CD4-positive, alpha-beta memory T cell (primary cell): ENCODE measurements at regions of chr13 and their contacts with region 1.

Region 1: DNA sequence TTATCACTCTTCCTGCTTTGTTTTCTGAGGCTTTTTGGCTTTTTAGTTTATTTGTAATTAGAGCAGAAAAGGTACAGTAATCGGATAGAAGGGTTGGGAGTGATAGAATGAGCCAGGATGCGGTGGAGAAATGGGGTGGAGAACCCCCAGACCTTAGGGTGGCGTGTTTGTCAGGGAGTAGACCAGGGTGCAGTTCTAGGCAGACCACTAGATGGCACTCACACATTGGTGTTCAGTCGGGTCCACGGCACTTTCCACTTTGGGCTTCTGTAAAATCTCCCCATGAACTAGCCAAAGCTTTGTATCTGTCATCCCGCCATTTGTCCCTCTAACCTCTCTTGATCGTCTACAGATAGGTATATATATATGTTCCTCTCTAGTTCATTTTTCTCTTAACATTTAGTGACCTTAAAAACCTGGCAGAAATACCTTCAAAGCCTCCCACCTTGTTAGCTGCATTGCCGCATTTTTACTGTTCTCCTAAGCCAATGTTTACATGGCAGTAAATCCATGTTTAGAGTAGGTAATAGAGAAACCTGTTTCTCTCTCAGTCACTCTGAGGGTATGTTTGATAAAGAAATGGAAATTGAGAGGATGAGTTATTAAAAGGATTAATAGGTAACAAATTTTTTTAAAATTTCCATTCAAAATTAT is 154.9 kb downstream of the TM9SF2 start:
- DNase-seq: peak; percentile 79 to 85 (median 81)
- H3K4me3 ChIP-seq: peak overlapping the region in 1 of 2 donors; percentile 43
- H3K4me3 Mint-ChIP-seq: peak overlapping the region; percentile 74 to 88 (median 86)
- H3K27ac ChIP-seq: peak overlapping the region; percentile 76
- H3K27ac Mint-ChIP-seq: peak overlapping the region; percentile 88 to 96 (median 95)
- H3K4me1 ChIP-seq: peaks cover 56% of the 10 kb centered on the region
- H3K4me1 Mint-ChIP-seq: peaks cover 33 to 55% (median 42%) of the 10 kb centered on the region in 4 donors
- H3K27me3 ChIP-seq: no peaks in the 10 kb centered on the region
- H3K27me3 Mint-ChIP-seq: no peaks in the 10 kb centered on the region

Region 2: DNA sequence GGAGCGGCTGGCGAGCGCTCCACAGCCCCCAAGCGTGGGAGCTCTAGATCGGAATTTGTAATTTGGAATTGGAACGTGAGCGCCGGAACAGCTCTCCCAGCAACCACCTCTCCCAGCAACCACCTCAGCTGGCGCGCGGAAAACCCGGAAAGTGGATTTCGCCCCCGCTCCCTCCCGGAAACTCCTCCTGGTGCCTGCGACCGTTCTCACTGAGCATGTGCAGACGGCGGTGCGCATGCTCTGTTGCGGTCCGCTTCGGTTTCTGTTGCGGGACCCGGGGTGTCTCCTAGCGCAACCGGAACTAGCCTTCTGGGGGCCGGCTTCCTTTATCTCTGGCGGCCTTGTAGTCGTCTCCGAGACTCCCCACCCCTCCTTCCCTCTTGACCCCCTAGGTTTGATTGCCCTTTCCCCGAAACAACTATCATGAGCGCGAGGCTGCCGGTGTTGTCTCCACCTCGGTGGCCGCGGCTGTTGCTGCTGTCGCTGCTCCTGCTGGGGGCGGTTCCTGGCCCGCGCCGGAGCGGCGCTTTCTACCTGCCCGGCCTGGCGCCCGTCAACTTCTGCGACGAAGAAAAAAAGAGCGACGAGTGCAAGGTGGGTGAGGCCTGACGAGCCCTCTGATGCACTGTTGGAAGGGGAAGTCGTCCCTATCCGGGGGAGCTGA is 154.9 kb before region 1 on chr13 and contains the start of gene TM9SF2:
- CTCF ChIA-PET with region 1: interaction called, 10 read pairs
- POLR2A ChIA-PET with region 1: interaction called, 13 read pairs
- intact Hi-C with region 1: no loop called
- DNase-seq: peak; percentile 96 to 98 (median 97)
- H3K4me3 ChIP-seq: peak within 1 kb of the TSS; percentile 57 to 72
- H3K4me3 Mint-ChIP-seq: peak within 1 kb of the TSS; percentile 89 to 99 (median 98)
- H3K27ac ChIP-seq: peak within 1 kb of the TSS; percentile 86
- H3K27ac Mint-ChIP-seq: peak within 1 kb of the TSS; percentile 98 to 99 (median 98)
- H3K4me1 ChIP-seq: peaks cover 86% of the 10 kb centered on the region
- H3K4me1 Mint-ChIP-seq: peaks cover 49 to 94% (median 71%) of the 10 kb centered on the region in 4 donors
- H3K27me3 ChIP-seq: no peaks in the 10 kb centered on the region
- H3K27me3 Mint-ChIP-seq: no peaks in the 10 kb centered on the region
- total RNA-seq, gene TM9SF2: 60.0 to 64.2 TPM

Region 3: GRCh38 chr13:99671746-99672145 is 15.5 kb after region 1 on chr13:
- CTCF ChIA-PET with region 1: interaction called, 25 read pairs
- POLR2A ChIA-PET with region 1: interaction called, 3 read pairs
- intact Hi-C with region 1: no loop called
- DNase-seq: no peak
- H3K4me3 ChIP-seq: no peak overlapping the region
- H3K4me3 Mint-ChIP-seq: no peak overlapping the region
- H3K27ac ChIP-seq: no peak overlapping the region
- H3K27ac Mint-ChIP-seq: peak overlapping the region in 2 of 7 donors; percentile 15 to 57
- H3K4me1 ChIP-seq: no peaks in the 10 kb centered on the region
- H3K4me1 Mint-ChIP-seq: peaks cover 0 to 6% (median 2%) of the 10 kb centered on the region in 4 donors
- H3K27me3 ChIP-seq: no peaks in the 10 kb centered on the region
- H3K27me3 Mint-ChIP-seq: no peaks in the 10 kb centered on the region

Region 4: GRCh38 chr13:99908140-99908803 is 252.1 kb after region 1 on chr13:
- CTCF ChIA-PET with region 1: interaction called, 63 read pairs
- POLR2A ChIA-PET with region 1: interaction called, 20 read pairs
- intact Hi-C with region 1: no loop called
- DNase-seq: no peak
- H3K4me3 ChIP-seq: no peak overlapping the region
- H3K4me3 Mint-ChIP-seq: no peak overlapping the region
- H3K27ac ChIP-seq: no peak overlapping the region
- H3K27ac Mint-ChIP-seq: no peak overlapping the region
- H3K4me1 ChIP-seq: peaks cover 23% of the 10 kb centered on the region
- H3K4me1 Mint-ChIP-seq: peaks cover 15 to 27% (median 16%) of the 10 kb centered on the region in 4 donors
- H3K27me3 ChIP-seq: no peaks in the 10 kb centered on the region
- H3K27me3 Mint-ChIP-seq: peaks cover 6 to 9% of the 10 kb centered on the region in 2 donors

Region 5: DNA sequence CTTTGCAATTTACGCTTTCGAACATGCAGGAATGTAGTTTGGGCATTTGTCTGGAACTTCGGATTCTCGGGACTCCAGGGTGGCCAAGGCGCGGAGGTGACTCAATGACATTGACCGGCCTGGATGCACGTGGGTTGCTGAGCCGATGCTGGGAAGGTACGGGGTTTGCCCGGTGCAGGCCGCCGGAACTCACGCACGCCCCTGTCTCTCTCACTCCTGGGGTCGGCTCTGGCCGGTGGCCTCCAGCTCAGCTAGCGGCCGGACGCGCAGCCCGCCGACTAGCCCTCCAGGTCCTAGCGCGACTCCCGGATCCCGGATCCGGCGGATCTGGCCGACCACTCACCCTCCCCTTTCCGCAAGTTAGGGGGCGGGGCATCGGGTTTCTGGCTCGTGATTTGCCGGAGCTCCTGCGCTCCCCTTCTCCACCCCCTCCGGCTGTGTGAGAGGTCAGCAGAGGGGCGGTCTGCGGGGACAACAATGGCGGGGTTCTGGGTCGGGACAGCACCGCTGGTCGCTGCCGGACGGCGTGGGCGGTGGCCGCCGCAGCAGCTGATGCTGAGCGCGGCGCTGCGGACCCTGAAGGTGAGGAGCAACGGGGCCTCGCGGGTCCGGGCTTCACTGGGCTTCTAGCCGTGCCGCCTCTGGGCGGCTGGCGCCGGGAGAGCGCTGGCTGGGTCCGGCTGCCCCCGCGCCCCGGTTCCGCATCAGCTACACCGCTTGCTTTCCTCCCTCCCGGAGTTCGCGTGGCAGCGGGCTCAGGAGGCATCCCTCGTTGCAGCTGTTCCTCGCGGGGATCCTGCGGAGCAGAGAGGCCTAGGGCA is 432.6 kb after region 1 on chr13 and contains the start of gene PCCA:
- CTCF ChIA-PET with region 1: no interaction called
- POLR2A ChIA-PET with region 1: interaction called, 3 read pairs
- intact Hi-C with region 1: loop called (anchors 2 kb)
- DNase-seq: peak; percentile 41 to 75 (median 50)
- H3K4me3 ChIP-seq: peak within 1 kb of the TSS; percentile 66 to 81
- H3K4me3 Mint-ChIP-seq: peak within 1 kb of the TSS; percentile 90 to 99 (median 98)
- H3K27ac ChIP-seq: peak within 1 kb of the TSS; percentile 44
- H3K27ac Mint-ChIP-seq: peak within 1 kb of the TSS; percentile 28 to 96 (median 84)
- H3K4me1 ChIP-seq: peaks cover 28% of the 10 kb centered on the region
- H3K4me1 Mint-ChIP-seq: peaks cover 14 to 28% (median 16%) of the 10 kb centered on the region in 4 donors
- H3K27me3 ChIP-seq: no peaks in the 10 kb centered on the region
- H3K27me3 Mint-ChIP-seq: no peaks in the 10 kb centered on the region
- total RNA-seq, gene PCCA: 8.7 to 9.7 TPM

Region 6: DNA sequence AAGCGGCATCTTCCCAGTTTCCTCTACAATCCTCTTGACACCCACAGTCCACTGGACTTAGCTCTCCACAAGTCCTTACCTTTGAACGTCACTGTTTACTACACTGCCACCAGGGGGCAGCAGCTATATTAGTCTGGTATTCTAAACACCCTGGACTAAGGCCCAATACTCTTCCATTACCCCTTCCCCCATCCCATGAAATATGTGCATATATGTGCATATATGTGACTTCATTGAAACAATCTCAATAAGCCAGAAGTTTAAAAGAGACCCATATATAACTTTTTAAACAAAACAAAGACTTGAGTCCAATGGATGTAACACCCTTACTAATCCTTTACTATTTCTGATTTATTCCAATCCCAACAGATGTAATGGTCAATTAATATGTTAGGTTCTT is 916.9 kb after region 1 on chr13:
- CTCF ChIA-PET with region 1: interaction called, 10 read pairs
- POLR2A ChIA-PET with region 1: interaction called, 3 read pairs
- intact Hi-C with region 1: no loop called
- DNase-seq: peak; percentile 61 to 76 (median 68)
- H3K4me3 ChIP-seq: no peak overlapping the region
- H3K4me3 Mint-ChIP-seq: no peak overlapping the region
- H3K27ac ChIP-seq: no peak overlapping the region
- H3K27ac Mint-ChIP-seq: no peak overlapping the region
- H3K4me1 ChIP-seq: peaks cover 11% of the 10 kb centered on the region
- H3K4me1 Mint-ChIP-seq: peaks cover 12 to 28% (median 16%) of the 10 kb centered on the region in 4 donors
- H3K27me3 ChIP-seq: no peaks in the 10 kb centered on the region
- H3K27me3 Mint-ChIP-seq: no peaks in the 10 kb centered on the region